AG04449 (cell line): ENCODE measurements at regions of chr3 and their contacts with region 1.

Region 1: GRCh38 chr3:142828703-142829305 is 60.1 kb downstream of the PCOLCE2 start:
- DNase-seq: peak; percentile 10
- H3K4me3 ChIP-seq: no peak overlapping the region
- CTCF ChIP-seq: peak; percentile 92

Region 2: GRCh38 chr3:142664819-142665218 is 164.0 kb before region 1 on chr3:
- CTCF ChIA-PET with region 1: no interaction called
- POLR2A ChIA-PET with region 1: no interaction called
- DNase-seq: no peak
- H3K4me3 ChIP-seq: no peak overlapping the region
- CTCF ChIP-seq: no peak

Region 3: DNA sequence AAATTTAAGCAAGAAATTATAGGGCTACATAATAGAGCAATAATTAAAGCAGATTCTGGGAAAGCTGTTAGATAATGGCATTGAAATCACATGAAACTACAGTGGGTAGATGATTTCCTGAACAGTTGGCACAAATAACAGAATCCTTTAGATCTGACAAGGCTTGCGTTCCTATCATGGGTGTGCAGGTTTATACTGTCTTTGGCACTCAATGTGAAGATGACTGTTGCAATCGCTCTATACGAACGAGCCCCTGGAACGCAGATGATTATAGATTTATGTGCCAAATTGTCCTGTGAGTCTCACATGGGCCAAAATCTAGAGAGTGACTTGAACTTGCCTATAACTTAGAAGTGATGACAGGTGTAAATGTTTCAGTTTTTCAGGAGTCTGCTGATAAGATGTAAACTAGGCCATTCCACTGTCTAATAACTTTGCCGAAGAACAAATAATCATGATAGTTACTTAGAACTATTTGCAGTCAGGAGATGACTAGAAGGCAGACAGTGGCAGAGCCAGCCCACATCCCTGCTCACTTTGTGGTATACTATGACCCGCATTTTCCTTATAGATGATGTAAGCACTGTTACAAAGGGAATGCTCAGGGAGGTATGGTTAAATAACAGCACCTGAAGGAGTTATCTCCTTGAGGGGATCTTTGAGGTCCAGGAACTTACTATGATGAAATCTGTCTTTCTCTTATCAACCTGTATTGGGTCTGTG is 135.5 kb before region 1 on chr3:
- CTCF ChIA-PET with region 1: no interaction called
- POLR2A ChIA-PET with region 1: no interaction called
- DNase-seq: no peak
- H3K4me3 ChIP-seq: no peak overlapping the region
- CTCF ChIP-seq: no peak

Region 4: GRCh38 chr3:142808103-142808917 is 20.5 kb before region 1 on chr3:
- CTCF ChIA-PET with region 1: interaction called, 40 read pairs
- POLR2A ChIA-PET with region 1: no interaction called
- DNase-seq: peak; percentile 5
- H3K4me3 ChIP-seq: no peak overlapping the region
- CTCF ChIP-seq: no peak

Region 5: DNA sequence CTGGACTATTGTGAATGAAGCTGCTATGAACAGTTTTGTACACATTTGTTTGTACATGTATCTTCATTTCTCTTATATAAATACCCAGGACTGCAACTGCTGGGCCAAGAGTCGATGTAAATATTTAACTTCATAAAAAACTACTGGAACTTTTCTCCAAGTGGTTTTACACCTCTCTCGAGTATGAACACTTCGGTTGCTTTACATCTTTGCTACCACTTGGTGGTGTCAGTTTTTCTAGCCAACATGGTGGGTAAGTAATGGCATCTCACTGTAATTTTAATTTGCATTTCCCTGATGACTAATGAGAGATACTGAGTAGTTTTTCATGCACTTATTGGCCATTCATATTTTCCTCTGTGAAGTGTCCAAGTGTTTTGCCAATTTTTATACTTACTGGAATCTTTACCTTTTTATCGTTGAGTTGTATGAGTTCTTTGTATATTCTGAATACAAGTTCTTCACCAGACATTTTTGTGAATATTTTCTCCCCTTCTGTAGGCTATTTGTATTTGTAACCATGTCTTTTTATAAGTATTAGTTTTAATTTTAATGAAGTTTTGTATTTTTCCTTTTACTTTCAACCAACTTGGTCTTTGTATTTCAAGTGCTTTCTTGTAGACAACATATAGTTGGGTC is 15.7 kb after region 1 on chr3:
- CTCF ChIA-PET with region 1: interaction called, 49 read pairs
- POLR2A ChIA-PET with region 1: no interaction called
- DNase-seq: no peak
- H3K4me3 ChIP-seq: no peak overlapping the region
- CTCF ChIP-seq: peak; percentile 45

Region 6: DNA sequence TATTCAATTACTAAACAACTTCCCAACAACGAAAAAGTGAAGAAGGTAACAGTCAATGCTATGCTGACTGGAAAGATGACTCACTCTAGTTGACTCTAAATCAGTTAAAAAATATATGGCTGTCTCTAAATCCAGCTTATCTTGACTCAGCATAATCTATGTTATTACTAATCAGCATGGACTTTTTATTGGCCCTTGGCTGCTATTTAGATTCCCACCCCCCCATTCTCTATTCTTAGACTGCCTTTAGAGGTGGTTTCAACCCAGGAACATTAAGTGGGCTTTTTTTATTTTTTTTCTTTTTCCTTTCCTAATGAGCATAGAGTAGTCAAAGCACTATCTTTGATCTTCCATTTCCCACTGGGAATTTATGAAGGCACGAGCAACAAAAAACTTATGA is 58.1 kb after region 1 on chr3:
- CTCF ChIA-PET with region 1: interaction called, 19 read pairs
- POLR2A ChIA-PET with region 1: no interaction called
- DNase-seq: peak; percentile 28
- H3K4me3 ChIP-seq: no peak overlapping the region
- CTCF ChIP-seq: no peak

Region 7: GRCh38 chr3:142929109-142929508 is 100.3 kb after region 1 on chr3:
- CTCF ChIA-PET with region 1: interaction called, 38 read pairs
- POLR2A ChIA-PET with region 1: no interaction called
- DNase-seq: no peak
- H3K4me3 ChIP-seq: no peak overlapping the region
- CTCF ChIP-seq: peak; percentile 46

Region 8: DNA sequence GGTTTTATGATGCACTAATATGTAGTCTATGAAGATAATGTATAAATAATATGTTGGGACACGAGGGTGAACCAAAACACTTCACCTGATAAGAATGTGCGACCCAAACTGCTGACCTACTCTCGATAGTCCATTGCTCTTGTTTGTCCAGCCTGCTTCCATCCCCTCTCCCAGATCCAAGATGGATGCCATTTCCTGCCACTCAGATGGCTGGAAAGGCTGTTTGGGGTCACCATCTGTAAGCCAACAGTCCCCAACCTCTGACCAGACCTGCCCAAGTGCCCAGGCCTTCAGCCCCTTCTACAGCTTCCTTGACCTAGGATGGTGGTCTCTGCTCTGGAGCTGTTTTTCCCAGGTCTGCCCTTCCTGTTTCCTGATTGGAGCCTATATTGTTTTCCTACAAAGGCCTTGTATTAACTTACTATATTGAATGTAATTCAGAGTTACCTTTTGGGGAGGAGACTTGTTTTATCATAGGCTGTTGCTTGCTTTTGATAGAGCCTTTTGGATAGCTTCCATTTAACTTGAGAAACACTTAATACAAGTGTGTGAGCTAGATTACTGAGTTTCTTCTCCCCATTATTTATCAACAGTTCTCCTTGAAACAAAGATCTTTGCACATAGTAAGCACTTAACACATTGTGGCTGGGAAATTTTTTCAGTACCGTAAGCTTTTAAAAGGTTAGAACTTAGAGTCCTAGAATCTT is 139.7 kb after region 1 on chr3:
- CTCF ChIA-PET with region 1: interaction called, 21 read pairs
- POLR2A ChIA-PET with region 1: no interaction called
- DNase-seq: no peak
- H3K4me3 ChIP-seq: no peak overlapping the region
- CTCF ChIP-seq: no peak

Region 9: DNA sequence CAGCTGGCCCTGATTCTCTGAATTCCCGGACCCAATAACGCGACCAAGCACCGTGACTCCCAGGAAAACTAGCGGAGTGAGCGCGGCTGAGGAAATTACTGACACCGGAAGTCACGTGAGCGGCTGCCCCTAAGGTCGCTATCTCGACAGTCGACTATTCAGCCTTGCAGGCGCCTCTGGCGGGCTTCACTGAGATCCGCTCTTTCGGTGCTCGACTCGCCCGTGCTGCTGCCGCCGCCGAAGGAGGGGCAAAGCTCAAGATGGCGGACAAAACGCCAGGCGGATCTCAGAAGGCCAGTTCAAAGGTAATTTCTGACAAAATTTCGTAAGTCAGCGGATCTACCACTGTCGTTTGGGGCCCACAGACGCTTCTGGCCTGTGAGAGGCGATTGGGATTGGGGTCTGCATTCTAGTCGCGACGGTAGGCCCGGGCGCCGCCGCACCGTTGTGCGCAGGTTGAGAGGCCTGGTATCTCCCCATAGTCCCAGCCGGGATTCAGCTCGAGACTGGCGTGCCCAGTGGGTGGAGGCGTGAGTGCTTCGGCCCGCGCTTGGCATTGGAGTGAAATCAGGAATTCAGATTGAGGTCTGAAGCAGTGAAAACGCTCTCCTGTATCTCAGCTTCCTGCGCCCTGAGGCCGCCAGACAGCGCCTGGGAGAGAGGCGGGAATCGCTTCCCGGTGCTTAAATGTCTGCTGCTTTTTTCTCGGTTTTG is 172.7 kb after region 1 on chr3 and contains the start of gene U2SURP:
- CTCF ChIA-PET with region 1: interaction called, 584 read pairs
- POLR2A ChIA-PET with region 1: no interaction called
- DNase-seq: peak; percentile 93
- H3K4me3 ChIP-seq: peak within 1 kb of the TSS; percentile 91
- CTCF ChIP-seq: no peak

Region 10: DNA sequence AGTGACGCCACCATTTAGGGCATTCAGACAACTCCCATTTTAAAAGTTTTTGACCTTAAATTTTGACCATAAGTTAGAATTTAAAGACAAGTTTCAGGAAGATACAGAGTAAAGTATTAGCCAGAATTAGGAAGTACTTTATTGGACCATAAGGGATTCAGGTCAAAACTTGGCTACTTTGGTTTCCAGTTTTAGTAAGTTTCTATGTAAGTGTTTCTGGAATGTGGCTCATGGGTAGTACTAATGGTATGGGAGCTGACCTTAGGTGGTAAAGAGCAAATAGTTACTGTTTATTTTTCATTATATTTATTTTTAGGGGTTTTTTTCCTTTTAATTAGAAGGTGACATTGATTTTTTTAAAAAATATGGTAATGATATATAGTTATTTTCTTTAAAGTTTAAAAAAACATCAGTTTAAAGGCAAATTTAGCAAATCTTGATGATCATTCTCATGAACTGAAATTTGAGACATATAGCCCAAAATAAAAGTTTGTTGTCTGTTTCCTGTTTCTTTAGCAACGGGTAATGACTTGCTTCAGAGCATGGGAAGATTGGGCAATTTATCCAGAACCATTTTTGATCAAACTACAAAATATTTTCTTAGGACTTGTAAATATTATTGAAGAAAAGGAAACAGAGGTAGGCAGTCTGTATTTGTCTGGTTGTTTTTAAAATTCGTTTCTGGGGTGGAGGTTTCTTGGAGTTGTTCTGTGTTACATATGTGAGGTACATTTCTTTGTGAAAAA is 206.8 kb after region 1 on chr3:
- CTCF ChIA-PET with region 1: no interaction called
- POLR2A ChIA-PET with region 1: no interaction called
- DNase-seq: no peak
- H3K4me3 ChIP-seq: no peak overlapping the region
- CTCF ChIP-seq: no peak